ENCODE measurements at regions of chr10 and their contacts with region 1.

Region 1: GRCh38 chr10:102450194-102450938 is 977 bp downstream of the C10orf95 start:
- DNase-seq: peak; percentile 87
- ATAC-seq: peak; percentile 60
- H3K4me3 Mint-ChIP-seq: peak overlapping the region; percentile 96
- H3K27ac Mint-ChIP-seq: peak overlapping the region; percentile 94
- H3K4me1 Mint-ChIP-seq: peaks cover 26% of the 10 kb centered on the region
- H3K27me3 Mint-ChIP-seq: no peaks in the 10 kb centered on the region
- CTCF ChIP-seq: no peak

Region 2: DNA sequence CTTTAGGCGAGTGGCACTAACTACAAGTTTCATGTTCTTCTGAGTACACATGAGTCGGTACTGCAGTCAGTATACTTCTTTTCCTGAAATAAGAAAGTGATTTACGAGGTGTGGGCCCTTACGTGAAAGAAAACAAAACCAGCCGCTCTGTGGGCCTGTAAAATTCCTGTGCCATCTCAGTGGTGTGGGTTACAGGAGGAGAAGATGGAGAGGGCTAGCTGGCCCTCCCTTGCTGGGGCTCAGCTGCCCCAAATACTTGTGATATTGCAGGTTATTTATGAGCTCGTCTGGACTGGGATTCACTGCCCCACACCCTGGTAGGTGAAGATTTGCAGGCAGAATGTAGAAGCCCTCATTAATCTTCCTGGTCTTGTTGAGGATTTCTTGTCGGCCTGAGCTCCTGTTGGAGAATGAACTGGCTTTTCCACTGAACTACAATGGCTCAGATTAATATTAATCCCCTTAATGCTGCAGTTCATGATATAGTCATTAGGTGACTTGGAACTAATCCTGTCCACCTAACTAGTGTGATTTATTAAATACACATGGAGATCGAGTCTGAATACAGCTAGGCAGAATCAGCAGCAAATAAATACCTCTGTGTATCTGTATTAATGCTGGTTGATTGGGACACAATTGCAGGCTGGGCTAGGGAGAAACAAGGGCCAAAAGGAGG is 137.0 kb before region 1 on chr10:
- CTCF ChIA-PET with region 1: no interaction called
- POLR2A ChIA-PET with region 1: no interaction called
- intact Hi-C with region 1: no loop called
- DNase-seq: no peak
- ATAC-seq: no peak
- H3K4me3 Mint-ChIP-seq: no peak overlapping the region
- H3K27ac Mint-ChIP-seq: no peak overlapping the region
- H3K4me1 Mint-ChIP-seq: peaks cover 39% of the 10 kb centered on the region
- H3K27me3 Mint-ChIP-seq: no peaks in the 10 kb centered on the region
- CTCF ChIP-seq: no peak

Region 3: GRCh38 chr10:102399217-102400089 is 50.9 kb before region 1 on chr10:
- CTCF ChIA-PET with region 1: interaction called, 19 read pairs
- POLR2A ChIA-PET with region 1: interaction called, 49 read pairs
- intact Hi-C with region 1: no loop called
- DNase-seq: peak; percentile 92
- ATAC-seq: peak; percentile 58
- H3K4me3 Mint-ChIP-seq: peak overlapping the region; percentile 93
- H3K27ac Mint-ChIP-seq: peak overlapping the region; percentile 86
- H3K4me1 Mint-ChIP-seq: peaks cover 47% of the 10 kb centered on the region
- H3K27me3 Mint-ChIP-seq: no peaks in the 10 kb centered on the region
- CTCF ChIP-seq: peak; percentile 98

Region 4: DNA sequence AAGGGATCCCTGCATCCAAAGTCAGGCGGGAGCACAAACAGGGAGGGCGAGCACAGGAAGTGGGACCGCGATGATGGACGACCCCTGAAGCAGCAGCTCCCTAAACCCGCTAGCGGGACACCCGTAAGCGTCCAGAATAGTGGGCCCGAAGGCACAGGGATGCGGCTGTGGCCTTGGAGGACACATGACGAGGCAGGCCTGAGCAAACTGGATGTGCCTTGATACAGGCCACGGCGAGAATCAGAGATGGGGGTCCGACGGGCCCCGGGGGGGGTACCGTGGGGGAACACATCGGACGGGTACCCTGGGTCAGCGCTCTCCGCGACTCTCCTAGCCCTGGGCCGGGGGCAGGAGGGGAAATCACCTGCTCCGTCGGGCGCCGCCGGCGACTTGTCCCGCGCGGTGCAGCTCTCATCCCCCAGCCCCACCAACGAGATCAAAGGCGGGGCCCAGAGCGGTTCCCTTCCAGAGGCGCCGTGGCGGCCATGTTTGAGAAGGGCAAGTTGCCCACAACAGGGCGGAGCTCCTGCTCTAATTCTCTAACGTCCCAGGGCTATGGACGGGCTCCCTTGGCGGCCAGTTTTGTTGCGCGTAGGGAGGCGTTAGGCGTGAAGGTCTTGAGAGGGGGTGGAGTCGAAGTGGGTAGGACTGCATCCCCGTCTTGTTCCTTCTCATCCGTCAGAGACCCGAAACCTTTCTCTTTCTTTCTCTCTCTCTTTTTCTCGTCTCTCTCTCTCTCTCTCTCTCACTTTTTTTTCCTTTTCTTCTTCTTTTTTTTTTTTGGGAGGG is 18.0 kb before region 1 on chr10 and contains the start of gene CUEDC2:
- CTCF ChIA-PET with region 1: interaction called, 32 read pairs
- POLR2A ChIA-PET with region 1: interaction called, 102 read pairs
- intact Hi-C with region 1: no loop called
- DNase-seq: peak; percentile 98
- ATAC-seq: peak; percentile 93
- H3K4me3 Mint-ChIP-seq: peak within 1 kb of the TSS; percentile 95
- H3K27ac Mint-ChIP-seq: peak within 1 kb of the TSS; percentile 94
- H3K4me1 Mint-ChIP-seq: peaks cover 42% of the 10 kb centered on the region
- H3K27me3 Mint-ChIP-seq: no peaks in the 10 kb centered on the region
- CTCF ChIP-seq: no peak
- total RNA-seq, gene CUEDC2: 71.8 to 76.4 TPM

Region 5: GRCh38 chr10:102461187-102462054 is 11.1 kb after region 1 on chr10:
- CTCF ChIA-PET with region 1: interaction called, 24 read pairs
- POLR2A ChIA-PET with region 1: interaction called, 71 read pairs
- intact Hi-C with region 1: no loop called
- DNase-seq: peak; percentile 95
- ATAC-seq: peak; percentile 96
- H3K4me3 Mint-ChIP-seq: peak overlapping the region; percentile 91
- H3K27ac Mint-ChIP-seq: peak overlapping the region; percentile 80
- H3K4me1 Mint-ChIP-seq: peaks cover 27% of the 10 kb centered on the region
- H3K27me3 Mint-ChIP-seq: no peaks in the 10 kb centered on the region
- CTCF ChIP-seq: no peak

Measured in activated CD8-positive, alpha-beta T cell treated with anti-CD3 and anti-CD28 coated beads for 36 hours (primary cell).